Activated CD8-positive, alpha-beta T cell treated with anti-CD3 and anti-CD28 coated beads, Interleukin-2, amount 10 ng/mL, durations not matched to agents 7 days and 5 days (primary cell): ENCODE measurements at regions of chr6 and their contacts with region 1.

Region 1: GRCh38 chr6:11224252-11224965 is 8.1 kb downstream of the NEDD9 start:
- DNase-seq: peak; percentile 82
- ATAC-seq: peak; percentile 82
- H3K4me3 Mint-ChIP-seq: peak overlapping the region; percentile 68
- H3K27ac Mint-ChIP-seq: peak overlapping the region; percentile 94
- H3K4me1 Mint-ChIP-seq: peaks cover 86% of the 10 kb centered on the region
- H3K27me3 Mint-ChIP-seq: no peaks in the 10 kb centered on the region

Region 2: GRCh38 chr6:11172501-11173332 is 51.7 kb before region 1 on chr6:
- CTCF ChIA-PET with region 1: interaction called, 29 read pairs
- POLR2A ChIA-PET with region 1: interaction called, 3 read pairs
- DNase-seq: peak; percentile 83
- ATAC-seq: peak; percentile 79
- H3K4me3 Mint-ChIP-seq: no peak overlapping the region
- H3K27ac Mint-ChIP-seq: no peak overlapping the region
- H3K4me1 Mint-ChIP-seq: peaks cover 22% of the 10 kb centered on the region
- H3K27me3 Mint-ChIP-seq: no peaks in the 10 kb centered on the region

Region 3: GRCh38 chr6:11194356-11195218 is 29.8 kb before region 1 on chr6:
- CTCF ChIA-PET with region 1: interaction called, 9 read pairs
- POLR2A ChIA-PET with region 1: interaction called, 27 read pairs
- DNase-seq: no peak
- ATAC-seq: no peak
- H3K4me3 Mint-ChIP-seq: no peak overlapping the region
- H3K27ac Mint-ChIP-seq: no peak overlapping the region
- H3K4me1 Mint-ChIP-seq: peaks cover 52% of the 10 kb centered on the region
- H3K27me3 Mint-ChIP-seq: no peaks in the 10 kb centered on the region

Region 4: DNA sequence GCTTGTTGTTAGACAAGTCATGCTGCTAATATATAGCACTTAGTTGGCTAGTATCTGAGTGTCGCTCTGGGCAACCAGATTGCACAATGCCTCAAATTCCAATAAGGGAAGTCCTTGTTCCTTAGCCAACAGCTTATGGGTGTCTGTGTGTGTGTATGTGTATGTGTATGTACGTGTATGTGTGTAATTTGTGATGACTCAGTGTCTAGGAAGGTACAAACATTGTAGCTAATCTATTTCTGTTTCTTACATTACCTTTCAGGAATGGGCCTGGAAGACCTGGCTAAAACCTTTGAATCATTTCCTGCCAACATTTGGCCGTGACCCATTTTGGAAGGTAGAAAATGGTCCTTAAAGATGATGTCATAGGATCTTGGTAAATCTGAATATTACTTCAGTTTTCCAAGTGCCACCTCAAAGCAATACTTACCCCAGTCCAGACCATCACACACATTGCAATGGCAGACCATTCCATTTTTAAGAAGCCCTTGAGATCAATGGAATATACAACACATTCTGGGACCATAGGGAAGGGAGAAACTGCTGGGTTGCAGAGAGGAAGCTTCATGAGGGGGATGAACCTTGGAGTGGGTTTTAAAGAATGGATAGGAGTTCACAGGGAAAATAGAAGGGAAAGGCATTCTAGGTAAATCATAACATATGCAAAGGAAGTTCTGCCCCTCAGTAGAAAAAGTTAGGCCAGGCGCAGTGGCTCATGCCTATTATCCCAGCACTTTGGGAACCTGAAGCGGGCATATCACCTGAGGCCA is 17.0 kb before region 1 on chr6:
- CTCF ChIA-PET with region 1: interaction called, 17 read pairs
- POLR2A ChIA-PET with region 1: interaction called, 28 read pairs
- DNase-seq: no peak
- ATAC-seq: no peak
- H3K4me3 Mint-ChIP-seq: no peak overlapping the region
- H3K27ac Mint-ChIP-seq: no peak overlapping the region
- H3K4me1 Mint-ChIP-seq: peaks cover 91% of the 10 kb centered on the region
- H3K27me3 Mint-ChIP-seq: no peaks in the 10 kb centered on the region

Region 5: GRCh38 chr6:11212625-11213024 is 11.8 kb before region 1 on chr6:
- CTCF ChIA-PET with region 1: interaction called, 10 read pairs
- POLR2A ChIA-PET with region 1: interaction called, 22 read pairs
- DNase-seq: no peak
- ATAC-seq: no peak
- H3K4me3 Mint-ChIP-seq: no peak overlapping the region
- H3K27ac Mint-ChIP-seq: peak overlapping the region; percentile 26
- H3K4me1 Mint-ChIP-seq: peaks cover 76% of the 10 kb centered on the region
- H3K27me3 Mint-ChIP-seq: no peaks in the 10 kb centered on the region

Region 6: GRCh38 chr6:11243861-11244260 is 19.5 kb after region 1 on chr6:
- CTCF ChIA-PET with region 1: no interaction called
- POLR2A ChIA-PET with region 1: no interaction called
- DNase-seq: no peak
- ATAC-seq: no peak
- H3K4me3 Mint-ChIP-seq: no peak overlapping the region
- H3K27ac Mint-ChIP-seq: no peak overlapping the region
- H3K4me1 Mint-ChIP-seq: peaks cover 5% of the 10 kb centered on the region
- H3K27me3 Mint-ChIP-seq: no peaks in the 10 kb centered on the region